ENCODE measurements at regions of chr1 and their contacts with region 1.

Region 1: GRCh38 chr1:26787706-26788514 is at the start of gene PIGV:
- DNase-seq: peak; percentile 90
- H3K4me3 ChIP-seq: peak within 1 kb of the TSS; percentile 75
- H3K27ac ChIP-seq: peak within 1 kb of the TSS; percentile 91
- H3K4me1 ChIP-seq: peaks cover 59% of the 10 kb centered on the region
- CTCF ChIP-seq: no peak
- total RNA-seq, gene PIGV: 8.2 and 10.3 TPM in 2 replicates

Region 2: DNA sequence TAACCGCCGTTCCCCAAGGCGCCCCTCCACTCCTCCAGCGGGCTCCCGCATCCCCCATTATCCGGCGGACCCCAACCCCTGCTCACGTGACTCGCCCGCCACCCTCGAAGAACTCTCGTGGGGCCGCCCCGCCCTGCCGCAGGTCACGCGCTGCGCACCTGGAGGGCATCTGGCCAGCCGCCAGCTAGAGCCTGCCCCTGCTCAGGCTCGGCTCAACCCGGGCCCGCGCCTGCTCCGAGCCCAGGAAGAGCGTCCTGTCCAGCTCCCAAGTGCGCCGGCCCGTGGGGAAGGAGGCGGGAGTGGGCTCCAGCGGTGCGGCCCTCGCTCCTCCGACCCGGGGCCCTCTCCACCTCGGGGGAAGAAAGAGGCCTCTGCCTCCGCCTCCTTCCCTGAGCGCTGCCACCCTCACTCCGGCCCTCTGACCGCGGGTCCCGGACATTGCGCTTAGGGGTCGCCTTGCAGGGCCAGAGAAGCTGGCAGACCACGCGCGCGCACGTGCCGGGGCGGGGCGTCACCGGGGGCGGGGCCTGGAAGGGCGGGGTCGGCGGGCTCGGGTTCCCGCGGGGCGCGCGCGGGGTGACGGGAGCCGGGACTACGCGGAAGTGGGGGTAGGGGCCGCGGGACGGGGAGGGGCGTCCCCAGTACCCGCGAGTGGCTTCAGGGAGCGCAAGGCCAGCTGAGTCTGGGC is 287.3 kb before region 1 on chr1:
- CTCF ChIA-PET with region 1: no interaction called
- POLR2A ChIA-PET with region 1: interaction called, 5 read pairs
- intact Hi-C with region 1: loop called (anchors 2 kb)
- DNase-seq: peak; percentile 90
- H3K4me3 ChIP-seq: peak overlapping the region; percentile 75
- H3K27ac ChIP-seq: peak overlapping the region; percentile 84
- H3K4me1 ChIP-seq: peaks cover 25% of the 10 kb centered on the region
- CTCF ChIP-seq: peak; percentile 51; the same call in 1 of the 2 replicates

Region 3: DNA sequence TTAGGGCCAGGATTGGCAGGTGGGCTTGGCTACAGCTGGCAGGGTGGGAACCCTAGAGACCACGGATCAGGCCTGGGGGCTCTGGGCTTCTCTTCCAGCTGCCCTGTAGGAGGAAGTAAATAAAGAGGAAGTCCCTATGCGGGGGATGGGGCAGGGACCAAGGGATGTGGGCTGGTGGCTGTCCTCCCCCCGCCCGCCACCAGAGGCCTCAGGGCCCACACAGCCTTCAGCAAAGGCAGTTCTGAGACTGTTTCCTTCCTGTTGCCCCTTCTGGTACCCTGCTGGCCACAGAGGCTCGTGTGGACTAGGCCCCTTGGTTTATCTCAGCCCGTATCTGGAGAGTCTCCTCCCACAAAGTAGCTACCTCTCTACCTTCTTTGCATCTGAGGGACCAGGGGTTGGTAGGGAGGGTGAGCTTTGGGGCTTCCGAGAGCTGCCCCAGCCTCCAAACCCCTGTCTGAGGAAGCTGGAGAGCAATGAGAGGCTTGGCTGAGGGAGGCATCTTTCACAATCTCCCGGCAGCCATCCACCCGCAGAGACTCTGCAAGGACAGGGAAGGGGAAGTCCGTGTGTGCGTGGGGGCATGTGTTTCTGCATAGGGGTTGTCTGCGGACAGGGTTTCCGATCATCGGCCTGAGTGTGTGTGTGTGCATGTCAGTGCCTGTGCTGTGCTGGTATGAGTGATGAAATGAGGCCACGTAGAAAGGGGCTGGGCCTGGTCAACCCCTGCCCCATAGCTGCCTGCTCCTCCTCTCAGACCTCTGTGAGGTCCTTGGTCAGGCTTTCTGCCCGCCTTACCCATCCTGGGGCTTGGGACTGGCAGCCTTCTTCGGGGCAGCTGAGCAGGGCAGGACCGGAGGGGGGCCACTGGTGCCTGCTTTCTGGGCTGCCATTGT is 245.8 kb before region 1 on chr1:
- CTCF ChIA-PET with region 1: interaction called, 4 read pairs
- POLR2A ChIA-PET with region 1: interaction called, 6 read pairs
- intact Hi-C with region 1: loop called (anchors 2 kb)
- DNase-seq: peak; percentile 95
- H3K4me3 ChIP-seq: peak overlapping the region; percentile 64
- H3K27ac ChIP-seq: peak overlapping the region; percentile 97
- H3K4me1 ChIP-seq: peaks cover 97% of the 10 kb centered on the region
- CTCF ChIP-seq: peak; percentile 72

Region 4: GRCh38 chr1:26602378-26602959 is 185.4 kb before region 1 on chr1:
- CTCF ChIA-PET with region 1: interaction called, 12 read pairs
- POLR2A ChIA-PET with region 1: interaction called, 9 read pairs
- intact Hi-C with region 1: loop called (anchors 1 kb)
- DNase-seq: peak; percentile 77
- H3K4me3 ChIP-seq: no peak overlapping the region
- H3K27ac ChIP-seq: no peak overlapping the region
- H3K4me1 ChIP-seq: peaks cover 5% of the 10 kb centered on the region
- CTCF ChIP-seq: peak; percentile 98

Region 5: GRCh38 chr1:26677306-26678115 is 110.4 kb before region 1 on chr1:
- CTCF ChIA-PET with region 1: interaction called, 9 read pairs
- POLR2A ChIA-PET with region 1: interaction called, 4 read pairs
- intact Hi-C with region 1: loop called (anchors 1 kb)
- DNase-seq: peak; percentile 82
- H3K4me3 ChIP-seq: peak overlapping the region; percentile 3
- H3K27ac ChIP-seq: no peak overlapping the region
- H3K4me1 ChIP-seq: peaks cover 15% of the 10 kb centered on the region
- CTCF ChIP-seq: peak; percentile 84

Region 6: GRCh38 chr1:26744075-26744959 is 43.6 kb before region 1 on chr1:
- CTCF ChIA-PET with region 1: interaction called, 5 read pairs
- POLR2A ChIA-PET with region 1: interaction called, 4 read pairs
- intact Hi-C with region 1: loop called (anchors 1 kb)
- DNase-seq: peak; percentile 97
- H3K4me3 ChIP-seq: peak overlapping the region; percentile 61
- H3K27ac ChIP-seq: peak overlapping the region; percentile 96
- H3K4me1 ChIP-seq: peaks cover 60% of the 10 kb centered on the region
- CTCF ChIP-seq: no peak

Region 7: GRCh38 chr1:26833432-26834405 is 45.8 kb after region 1 on chr1:
- CTCF ChIA-PET with region 1: no interaction called
- POLR2A ChIA-PET with region 1: interaction called, 4 read pairs
- intact Hi-C with region 1: loop called (anchors 2 kb)
- DNase-seq: peak; percentile 85
- H3K4me3 ChIP-seq: no peak overlapping the region
- H3K27ac ChIP-seq: peak overlapping the region; percentile 57
- H3K4me1 ChIP-seq: peaks cover 23% of the 10 kb centered on the region
- CTCF ChIP-seq: peak; percentile 52

Region 8: GRCh38 chr1:26853156-26853555 is 65.2 kb after region 1 on chr1:
- CTCF ChIA-PET with region 1: no interaction called
- POLR2A ChIA-PET with region 1: no interaction called
- intact Hi-C with region 1: no loop called
- DNase-seq: peak; percentile 80
- H3K4me3 ChIP-seq: no peak overlapping the region
- H3K27ac ChIP-seq: no peak overlapping the region
- H3K4me1 ChIP-seq: no peaks in the 10 kb centered on the region
- CTCF ChIP-seq: peak; percentile 93